ENCODE measurements at regions of chr3 and their contacts with region 1.

Region 1: GRCh38 chr3:7800006-7800780 is 701.4 kb upstream of the LMCD1 start:
- DNase-seq: peak; percentile 34
- H3K4me3 ChIP-seq: no peak overlapping the region
- H3K27ac ChIP-seq: no peak overlapping the region
- H3K4me1 ChIP-seq: no peaks in the 10 kb centered on the region
- H3K27me3 ChIP-seq: no peaks in the 10 kb centered on the region
- CTCF ChIP-seq: peak; percentile 6
- POLR2A ChIP-seq: no peak

Region 2: DNA sequence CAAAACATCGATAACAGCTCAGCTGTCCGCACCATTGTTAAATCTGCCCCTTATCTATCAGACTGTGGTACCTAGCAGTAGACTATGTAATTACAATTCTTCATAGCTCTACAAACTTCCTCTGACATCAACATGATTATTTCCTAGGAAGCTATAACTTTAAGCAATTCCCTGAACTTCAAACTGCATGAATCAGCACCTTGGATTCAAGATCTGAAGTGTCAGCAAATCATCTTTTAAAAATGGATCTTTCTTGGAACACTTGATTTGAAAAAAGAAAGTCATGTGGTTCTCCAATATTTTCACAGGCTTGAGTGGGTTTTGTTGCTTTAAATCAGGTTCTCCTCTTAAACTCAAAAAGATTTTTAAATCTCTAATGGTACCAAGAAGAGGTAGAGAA is 20.8 kb after region 1 on chr3:
- CTCF ChIA-PET with region 1: interaction called, 10 read pairs
- POLR2A ChIA-PET with region 1: no interaction called
- dilution Hi-C with region 1: no loop called
- intact Hi-C with region 1: no loop called
- DNase-seq: no peak
- H3K4me3 ChIP-seq: no peak overlapping the region
- H3K27ac ChIP-seq: no peak overlapping the region
- H3K4me1 ChIP-seq: no peaks in the 10 kb centered on the region
- H3K27me3 ChIP-seq: no peaks in the 10 kb centered on the region
- CTCF ChIP-seq: no peak
- POLR2A ChIP-seq: no peak

Region 3: GRCh38 chr3:8095724-8096123 is 295.5 kb after region 1 on chr3:
- CTCF ChIA-PET with region 1: interaction called, 14 read pairs
- POLR2A ChIA-PET with region 1: no interaction called
- dilution Hi-C with region 1: no loop called
- intact Hi-C with region 1: no loop called
- DNase-seq: peak; percentile 10
- H3K4me3 ChIP-seq: no peak overlapping the region
- H3K27ac ChIP-seq: no peak overlapping the region
- H3K4me1 ChIP-seq: no peaks in the 10 kb centered on the region
- H3K27me3 ChIP-seq: no peaks in the 10 kb centered on the region
- CTCF ChIP-seq: peak in 1 of 2 donors; percentile 10
- POLR2A ChIP-seq: no peak

Measured in endothelial cell of umbilical vein (primary cell).